Activated CD4-positive, alpha-beta memory T cell treated with anti-CD3 and anti-CD28 coated beads for 36 hours (primary cell): ENCODE measurements at regions of chr2 and their contacts with region 1.

Region 1: DNA sequence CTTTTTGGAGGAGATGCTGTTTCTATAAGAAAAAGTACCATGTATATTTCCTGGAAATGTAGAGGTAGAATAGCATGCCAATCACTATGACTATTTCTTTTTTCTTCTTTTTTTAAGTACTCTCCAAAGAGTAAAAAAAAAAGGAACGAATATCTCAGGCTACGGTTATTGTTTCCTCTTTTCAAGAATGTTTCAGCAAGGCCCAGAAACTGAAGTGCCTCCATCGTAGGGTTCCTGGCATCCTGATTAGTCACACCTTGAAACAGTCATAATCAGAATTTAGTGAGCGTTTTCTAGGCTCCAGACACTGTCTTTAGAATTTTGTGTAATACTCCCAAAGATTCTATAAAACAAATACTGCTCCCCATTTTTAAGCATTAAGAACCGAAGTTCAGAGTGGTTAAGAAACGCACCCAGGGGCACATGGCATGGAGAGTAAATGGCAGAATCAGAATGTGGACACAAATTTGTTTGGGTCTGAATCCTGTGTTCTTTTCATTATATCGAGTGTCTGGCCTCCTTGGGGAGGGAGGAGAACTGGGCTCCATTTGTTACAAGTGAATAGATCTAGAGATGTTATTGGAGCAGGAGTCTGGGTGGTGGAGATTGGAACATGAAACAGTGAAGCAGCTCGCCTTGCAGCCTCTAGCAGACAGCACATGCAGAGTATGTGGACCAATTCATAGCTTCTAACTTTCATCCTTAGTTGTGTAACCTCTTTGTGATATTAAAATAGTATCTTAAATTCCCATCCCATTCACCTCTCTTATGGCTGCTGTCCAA is 26.7 kb downstream of the ZEB2 start:
- DNase-seq: peak; percentile 27
- H3K4me3 Mint-ChIP-seq: no peak overlapping the region
- H3K27ac Mint-ChIP-seq: peak overlapping the region; percentile 55
- H3K4me1 Mint-ChIP-seq: peaks cover 29% of the 10 kb centered on the region
- H3K27me3 Mint-ChIP-seq: peaks cover 3% of the 10 kb centered on the region

Region 2: GRCh38 chr2:144510294-144510991 is 17.2 kb after region 1 on chr2:
- CTCF ChIA-PET with region 1: no interaction called
- POLR2A ChIA-PET with region 1: interaction called, 3 read pairs
- intact Hi-C with region 1: loop called (anchors 2 kb)
- DNase-seq: peak; percentile 62
- H3K4me3 Mint-ChIP-seq: peak overlapping the region; percentile 54
- H3K27ac Mint-ChIP-seq: peak overlapping the region; percentile 70
- H3K4me1 Mint-ChIP-seq: peaks cover 30% of the 10 kb centered on the region
- H3K27me3 Mint-ChIP-seq: peaks cover 57% of the 10 kb centered on the region